H1 (cell line): ENCODE measurements at regions of chr1 and their contacts with region 1.

Region 1: GRCh38 chr1:207997486-207998268 is 86.8 kb upstream of the CD34 start:
- DNase-seq: peak in 1 of 2 experiments; percentile 72
- H3K4me3 ChIP-seq: no peak overlapping the region
- H3K27ac ChIP-seq: no peak overlapping the region
- H3K4me1 ChIP-seq: peaks cover 0 to 9% (median 6%) of the 10 kb centered on the region in 4 experiments; a peak in 6 of 7 replicates
- H3K27me3 ChIP-seq: no peaks in the 10 kb centered on the region
- CTCF ChIP-seq: peak; percentile 80 to 92 (median 87)
- EP300 ChIP-seq: no peak
- POLR2A ChIP-seq: no peak
- RAD21 ChIP-seq: peak; percentile 47 to 59

Region 2: GRCh38 chr1:207818971-207819451 is 178.7 kb before region 1 on chr1:
- CTCF ChIA-PET with region 1: no interaction called
- POLR2A ChIA-PET with region 1: no interaction called
- DNase-seq: no peak
- H3K4me3 ChIP-seq: no peak overlapping the region
- H3K27ac ChIP-seq: no peak overlapping the region
- H3K4me1 ChIP-seq: peaks cover 0 to 3% (median 0%) of the 10 kb centered on the region in 4 experiments; a peak in 1 of 7 replicates
- H3K27me3 ChIP-seq: no peaks in the 10 kb centered on the region
- CTCF ChIP-seq: no peak
- EP300 ChIP-seq: no peak
- POLR2A ChIP-seq: no peak
- RAD21 ChIP-seq: no peak

Region 3: GRCh38 chr1:207925210-207925609 is 72.5 kb before region 1 on chr1:
- CTCF ChIA-PET with region 1: no interaction called
- POLR2A ChIA-PET with region 1: no interaction called
- DNase-seq: peak in 1 of 2 experiments; percentile 59
- H3K4me3 ChIP-seq: no peak overlapping the region
- H3K27ac ChIP-seq: no peak overlapping the region
- H3K4me1 ChIP-seq: peaks cover 0 to 7% (median 1%) of the 10 kb centered on the region in 4 experiments; a peak in 3 of 7 replicates
- H3K27me3 ChIP-seq: no peaks in the 10 kb centered on the region; a peak in 1 of 7 replicates
- CTCF ChIP-seq: no peak
- EP300 ChIP-seq: no peak
- POLR2A ChIP-seq: no peak
- RAD21 ChIP-seq: no peak

Region 4: DNA sequence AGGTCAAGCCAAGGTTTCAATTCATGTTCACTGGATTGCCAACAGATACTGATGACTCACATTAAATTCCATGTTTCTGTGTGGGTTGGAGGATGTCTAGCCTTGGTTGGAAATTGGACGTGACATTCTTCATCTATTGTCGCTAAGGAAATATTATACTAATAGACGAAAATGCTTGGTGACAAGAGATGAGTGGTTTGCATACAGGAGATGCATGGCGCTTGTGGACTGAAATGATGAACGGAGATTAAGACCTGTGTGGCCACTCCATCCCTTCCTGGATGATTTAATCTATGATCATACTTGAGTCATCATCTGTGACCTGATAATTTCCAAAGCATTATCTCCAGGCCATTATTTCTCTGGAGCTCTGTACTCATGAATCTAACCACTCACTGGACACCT is 10.3 kb after region 1 on chr1:
- CTCF ChIA-PET with region 1: interaction called, 13 read pairs
- POLR2A ChIA-PET with region 1: interaction called, 5 read pairs
- DNase-seq: no peak
- H3K4me3 ChIP-seq: no peak overlapping the region
- H3K27ac ChIP-seq: no peak overlapping the region
- H3K4me1 ChIP-seq: no peaks in the 10 kb centered on the region
- H3K27me3 ChIP-seq: no peaks in the 10 kb centered on the region; a peak in 1 of 7 replicates
- CTCF ChIP-seq: no peak
- EP300 ChIP-seq: no peak
- POLR2A ChIP-seq: no peak
- RAD21 ChIP-seq: no peak

Region 5: DNA sequence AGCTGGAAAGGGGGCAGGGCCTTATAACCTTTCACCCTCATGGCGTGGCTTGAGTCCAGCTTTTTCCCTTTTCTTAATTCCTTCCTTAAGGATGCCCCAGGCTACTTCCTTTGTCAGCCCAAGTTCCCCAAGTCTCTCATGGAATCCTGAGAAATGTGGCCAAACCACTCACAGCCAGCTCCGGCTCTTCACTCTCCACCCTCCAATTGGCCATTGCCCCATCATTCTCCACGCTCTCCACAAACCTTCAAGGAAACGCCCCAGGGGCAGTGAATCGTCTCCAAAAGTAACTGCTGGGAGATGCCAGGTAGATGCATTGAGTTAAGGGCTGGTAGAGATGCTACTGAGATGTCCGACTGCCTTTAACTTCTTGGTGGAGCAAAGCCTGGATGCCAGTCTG is 26.7 kb after region 1 on chr1:
- CTCF ChIA-PET with region 1: interaction called, 40 read pairs
- POLR2A ChIA-PET with region 1: no interaction called
- DNase-seq: no peak
- H3K4me3 ChIP-seq: no peak overlapping the region
- H3K27ac ChIP-seq: no peak overlapping the region
- H3K4me1 ChIP-seq: 0 out of 7 replicates have a peak, but pooled peaks cover 0 to 2% (median 0%) of the 10 kb centered on the region in 4 experiments
- H3K27me3 ChIP-seq: no peaks in the 10 kb centered on the region
- CTCF ChIP-seq: no peak
- EP300 ChIP-seq: no peak
- POLR2A ChIP-seq: no peak
- RAD21 ChIP-seq: no peak

Region 6: DNA sequence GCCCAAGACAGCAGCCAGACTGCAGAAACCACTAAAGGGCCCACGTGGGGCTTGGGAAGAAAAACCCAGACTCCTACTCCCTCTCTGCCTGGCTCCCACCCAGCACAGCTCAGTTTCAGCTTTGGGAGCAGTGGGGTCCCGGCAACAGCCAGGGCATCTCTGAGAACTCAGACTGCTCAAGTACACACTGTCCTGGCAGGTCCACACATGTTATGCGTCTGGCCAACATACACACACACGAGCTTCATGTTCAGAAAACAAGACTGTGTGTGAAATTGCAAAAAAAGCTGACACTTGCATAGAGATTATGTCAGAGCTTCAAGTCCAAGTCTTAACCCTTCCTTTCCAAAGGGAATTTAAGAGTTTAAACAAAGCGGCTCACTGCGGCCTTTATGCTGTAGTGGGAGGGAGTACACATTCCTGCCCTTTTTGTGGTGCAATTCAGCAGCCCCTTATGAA is 49.8 kb after region 1 on chr1:
- CTCF ChIA-PET with region 1: interaction called, 12 read pairs
- POLR2A ChIA-PET with region 1: no interaction called
- DNase-seq: no peak
- H3K4me3 ChIP-seq: no peak overlapping the region
- H3K27ac ChIP-seq: no peak overlapping the region
- H3K4me1 ChIP-seq: peaks cover 0 to 5% (median 0%) of the 10 kb centered on the region in 4 experiments; a peak in 1 of 7 replicates
- H3K27me3 ChIP-seq: no peaks in the 10 kb centered on the region
- CTCF ChIP-seq: no peak
- EP300 ChIP-seq: no peak
- POLR2A ChIP-seq: no peak
- RAD21 ChIP-seq: no peak

Region 7: GRCh38 chr1:208245185-208245705 is 247.6 kb after region 1 on chr1:
- CTCF ChIA-PET with region 1: interaction called, 31 read pairs
- POLR2A ChIA-PET with region 1: no interaction called
- DNase-seq: peak in 1 of 2 experiments; percentile 87
- H3K4me3 ChIP-seq: peak overlapping the region in 3 of 4 experiments; percentile 43 to 70 (median 44); a peak in 5 of 8 replicates
- H3K27ac ChIP-seq: no peak overlapping the region
- H3K4me1 ChIP-seq: peaks cover 0 to 11% (median 5%) of the 10 kb centered on the region in 4 experiments; a peak in 5 of 7 replicates
- H3K27me3 ChIP-seq: peaks cover 16 to 44% (median 36%) of the 10 kb centered on the region in 4 experiments
- CTCF ChIP-seq: peak; percentile 21 to 78 (median 76)
- EP300 ChIP-seq: no peak
- POLR2A ChIP-seq: no peak
- RAD21 ChIP-seq: peak; percentile 78 to 82